Endothelial cell of umbilical vein (primary cell): ENCODE measurements at regions of chr19 and their contacts with region 1.

Region 1: DNA sequence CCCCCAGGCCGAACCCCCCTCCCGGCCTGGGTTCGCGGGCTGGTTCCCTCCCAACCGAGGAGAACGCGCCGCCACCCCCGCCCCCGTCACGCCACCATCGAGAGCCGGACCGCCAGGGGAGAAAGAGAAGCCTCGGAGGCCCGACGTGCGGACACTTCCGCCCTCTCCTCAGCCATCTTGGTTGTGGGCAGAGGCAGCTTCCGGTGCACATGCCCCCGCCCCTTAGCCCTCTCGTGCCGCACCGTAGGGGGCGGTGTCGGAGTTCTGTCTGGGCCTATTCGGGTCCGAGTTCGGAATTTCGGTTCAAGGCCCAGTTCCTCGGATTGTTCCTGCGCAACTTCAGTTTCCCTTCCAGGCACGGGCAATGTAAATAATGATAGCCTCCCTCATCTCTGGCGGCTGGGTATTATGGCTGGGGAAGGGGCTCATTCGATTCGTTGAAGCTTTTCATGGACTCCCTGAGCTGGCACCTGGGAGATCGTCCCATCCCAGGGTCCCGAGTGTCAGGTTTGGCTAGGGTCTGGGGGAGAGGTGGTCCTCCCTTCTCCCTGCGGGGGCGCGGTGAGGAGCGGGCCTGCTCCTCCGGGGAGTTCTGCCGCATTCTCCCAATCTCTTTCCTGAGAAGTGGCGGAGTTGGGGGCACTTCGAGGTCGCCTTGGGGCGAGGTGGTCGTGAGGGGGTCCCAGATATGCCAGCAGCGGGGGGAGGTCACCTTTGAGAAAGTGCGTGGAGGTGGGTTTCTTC is at the starts of genes IER2 and STX10:
- DNase-seq: peak; percentile 96
- H3K4me3 ChIP-seq: peak within 1 kb of the TSS; percentile 50 to 97 (median 69)
- H3K27ac ChIP-seq: peak within 1 kb of the TSS; percentile 90
- H3K4me1 ChIP-seq: peaks cover 12% of the 10 kb centered on the region
- H3K27me3 ChIP-seq: no peaks in the 10 kb centered on the region
- CTCF ChIP-seq: peak in 1 of 2 donors; percentile 55
- POLR2A ChIP-seq: peak; percentile 68
- total RNA-seq, gene IER2: 81.6 and 97.0 TPM in 2 replicates
- total RNA-seq, gene STX10: 63.1 and 67.9 TPM in 2 replicates

Region 2: DNA sequence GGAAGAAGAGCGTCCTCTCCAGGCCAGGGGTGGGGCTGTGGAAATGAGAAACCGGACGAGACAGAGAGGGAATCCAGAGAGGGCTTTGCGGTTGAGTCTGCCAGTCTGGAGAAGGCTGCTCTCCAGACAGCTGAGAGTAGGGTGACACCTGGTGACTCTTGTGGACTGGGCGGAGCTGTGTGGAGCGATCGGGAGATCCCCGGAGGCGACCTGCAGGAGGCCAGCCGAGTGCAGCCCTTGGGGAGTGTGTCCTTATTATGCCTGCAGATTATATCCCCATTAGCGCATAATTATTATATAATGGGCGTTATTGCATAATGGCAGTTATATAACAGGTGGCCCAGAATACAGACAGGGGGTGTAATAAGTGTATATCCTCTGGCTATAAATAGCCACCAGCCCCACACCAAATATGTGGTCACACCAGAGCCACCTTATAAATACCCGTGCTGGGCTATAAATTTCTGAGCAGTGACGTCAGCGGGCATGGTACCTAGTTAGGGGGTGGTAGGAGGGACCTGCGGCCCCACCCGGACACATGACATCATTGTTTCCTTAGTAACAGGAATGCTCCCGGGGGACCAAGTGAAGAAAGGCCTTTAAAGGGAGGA is 113.9 kb before region 1 on chr19:
- CTCF ChIA-PET with region 1: no interaction called
- POLR2A ChIA-PET with region 1: no interaction called
- dilution Hi-C with region 1: no loop called
- intact Hi-C with region 1: no loop called
- DNase-seq: no peak
- H3K4me3 ChIP-seq: no peak overlapping the region
- H3K27ac ChIP-seq: peak overlapping the region; percentile 87
- H3K4me1 ChIP-seq: peaks cover 15% of the 10 kb centered on the region
- H3K27me3 ChIP-seq: no peaks in the 10 kb centered on the region
- CTCF ChIP-seq: no peak
- POLR2A ChIP-seq: no peak

Region 3: DNA sequence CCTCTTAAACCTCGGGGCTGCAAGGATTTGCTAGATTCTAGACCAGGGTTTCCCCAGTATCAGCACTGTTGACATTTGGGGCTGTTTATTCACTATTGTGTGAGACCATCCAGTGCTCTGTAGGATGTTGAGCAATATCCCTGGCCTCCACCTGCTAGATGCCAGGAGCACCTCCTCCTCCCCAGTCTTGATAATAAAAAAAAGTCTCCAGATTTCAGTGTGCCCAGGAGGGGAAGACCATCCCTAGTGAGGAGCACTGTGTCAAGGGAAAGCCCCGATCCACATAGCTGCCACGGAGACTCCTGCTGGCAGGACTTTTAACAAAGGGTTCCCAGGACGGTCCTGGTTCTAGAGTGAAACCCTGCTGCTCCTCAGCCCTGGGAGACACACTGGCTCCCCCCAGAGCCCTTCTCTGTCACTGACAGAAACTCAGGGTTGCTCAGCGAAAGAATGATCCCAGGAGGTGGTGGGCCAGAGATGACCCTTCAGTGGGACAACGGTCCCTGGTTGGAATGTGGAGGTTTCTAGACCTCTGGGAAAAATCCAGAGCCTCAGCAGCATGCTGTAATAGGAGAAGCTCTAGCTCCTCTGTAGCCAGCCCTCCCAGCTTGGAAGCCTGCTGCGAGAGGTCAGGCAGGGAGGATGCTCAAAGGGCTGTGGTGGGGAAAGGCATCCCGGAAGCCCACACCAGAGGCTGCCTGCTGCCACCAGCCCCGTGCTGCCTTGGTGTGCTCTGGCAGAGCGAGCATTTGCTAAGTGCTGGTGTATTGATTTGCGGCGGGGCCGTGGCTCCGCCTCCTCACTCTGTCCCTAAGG is 68.0 kb before region 1 on chr19:
- CTCF ChIA-PET with region 1: no interaction called
- POLR2A ChIA-PET with region 1: no interaction called
- dilution Hi-C with region 1: no loop called
- intact Hi-C with region 1: no loop called
- DNase-seq: peak; percentile 57
- H3K4me3 ChIP-seq: no peak overlapping the region
- H3K27ac ChIP-seq: no peak overlapping the region
- H3K4me1 ChIP-seq: peaks cover 4% of the 10 kb centered on the region
- H3K27me3 ChIP-seq: no peaks in the 10 kb centered on the region
- CTCF ChIP-seq: peak; percentile 39 to 60
- POLR2A ChIP-seq: no peak

Region 4: GRCh38 chr19:13099073-13099999 is 51.0 kb before region 1 on chr19:
- CTCF ChIA-PET with region 1: interaction called, 22 read pairs
- POLR2A ChIA-PET with region 1: interaction called, 8 read pairs
- dilution Hi-C with region 1: no loop called
- intact Hi-C with region 1: loop called (anchors 1 kb)
- DNase-seq: peak; percentile 79
- H3K4me3 ChIP-seq: peak overlapping the region in 2 of 3 experiments; percentile 10 to 17
- H3K27ac ChIP-seq: peak overlapping the region; percentile 89
- H3K4me1 ChIP-seq: peaks cover 54% of the 10 kb centered on the region
- H3K27me3 ChIP-seq: no peaks in the 10 kb centered on the region
- CTCF ChIP-seq: no peak
- POLR2A ChIP-seq: peak; percentile 84

Region 5: GRCh38 chr19:13117772-13118423 is 32.5 kb before region 1 on chr19 and contains the start of gene NACC1:
- CTCF ChIA-PET with region 1: interaction called, 14 read pairs
- POLR2A ChIA-PET with region 1: interaction called, 7 read pairs
- dilution Hi-C with region 1: no loop called
- intact Hi-C with region 1: loop called (anchors 1 kb)
- DNase-seq: peak; percentile 87
- H3K4me3 ChIP-seq: peak within 1 kb of the TSS; percentile 64 to 99 (median 81)
- H3K27ac ChIP-seq: peak within 1 kb of the TSS; percentile 57
- H3K4me1 ChIP-seq: peaks cover 13% of the 10 kb centered on the region
- H3K27me3 ChIP-seq: no peaks in the 10 kb centered on the region
- CTCF ChIP-seq: no peak
- POLR2A ChIP-seq: no peak
- total RNA-seq, gene NACC1: 95.4 and 97.6 TPM in 2 replicates

Region 6: DNA sequence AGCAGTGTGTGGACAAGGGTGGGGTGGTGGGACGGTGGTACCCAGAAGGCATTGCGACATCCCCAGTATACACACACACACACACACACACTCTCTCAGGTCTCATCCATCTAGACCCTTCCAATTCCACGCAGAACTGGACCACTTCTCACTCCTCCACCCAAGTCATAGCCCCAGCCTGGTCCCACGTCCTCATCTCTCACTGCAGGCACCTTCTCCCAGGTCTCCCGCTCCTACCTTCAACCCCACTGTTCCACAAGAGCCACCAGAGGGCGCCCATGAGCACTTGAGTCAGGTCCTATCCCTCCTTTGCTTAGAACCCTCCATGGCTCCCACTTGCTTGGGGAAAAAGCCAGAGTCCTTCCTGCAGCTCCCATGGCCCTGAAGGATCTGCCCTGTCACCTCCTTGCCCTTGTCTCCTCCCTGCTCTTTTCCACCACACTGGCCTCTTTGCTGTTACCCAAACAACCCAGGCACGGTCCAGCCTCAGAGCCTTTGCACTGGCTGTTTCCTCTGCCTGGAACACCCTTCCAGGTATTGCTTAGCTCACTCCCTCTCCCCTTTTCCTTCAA is 62.5 kb after region 1 on chr19:
- CTCF ChIA-PET with region 1: interaction called, 3 read pairs
- POLR2A ChIA-PET with region 1: no interaction called
- dilution Hi-C with region 1: no loop called
- intact Hi-C with region 1: loop called (anchors 2 kb)
- DNase-seq: peak; percentile 39
- H3K4me3 ChIP-seq: no peak overlapping the region
- H3K27ac ChIP-seq: no peak overlapping the region
- H3K4me1 ChIP-seq: no peaks in the 10 kb centered on the region
- H3K27me3 ChIP-seq: no peaks in the 10 kb centered on the region
- CTCF ChIP-seq: peak; percentile 65 to 74
- POLR2A ChIP-seq: no peak

Region 7: DNA sequence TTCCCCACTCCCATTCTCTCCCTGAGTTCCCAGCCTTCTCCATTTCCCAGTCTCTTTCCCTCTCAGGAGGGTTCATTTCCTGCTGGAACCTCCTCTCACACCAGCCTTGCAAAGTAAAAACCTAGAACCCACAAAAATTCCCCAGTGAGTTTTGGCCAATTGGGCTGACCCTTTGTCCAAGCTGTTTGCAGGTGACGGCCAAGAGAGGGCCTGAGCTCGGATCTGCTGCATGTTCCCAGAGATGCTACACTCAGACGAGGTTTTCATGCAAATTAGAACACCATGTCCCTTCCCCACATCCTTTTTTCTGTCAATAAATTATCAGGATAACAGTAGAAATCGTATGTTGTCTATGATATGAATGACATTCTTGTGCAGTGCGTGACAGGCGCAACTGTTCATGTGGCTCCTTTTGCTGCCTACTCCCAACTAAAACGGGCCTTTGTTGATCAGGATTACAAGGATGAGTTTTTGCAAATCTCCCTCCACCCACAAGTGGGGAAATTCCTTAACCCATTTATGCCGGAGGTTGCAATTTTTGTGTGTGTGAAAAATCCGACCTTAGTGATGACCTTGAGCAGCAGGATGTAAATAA is 206.4 kb after region 1 on chr19:
- CTCF ChIA-PET with region 1: no interaction called
- POLR2A ChIA-PET with region 1: no interaction called
- dilution Hi-C with region 1: no loop called
- intact Hi-C with region 1: no loop called
- DNase-seq: no peak
- H3K4me3 ChIP-seq: no peak overlapping the region
- H3K27ac ChIP-seq: no peak overlapping the region
- H3K4me1 ChIP-seq: no peaks in the 10 kb centered on the region
- H3K27me3 ChIP-seq: no peaks in the 10 kb centered on the region
- CTCF ChIP-seq: no peak
- POLR2A ChIP-seq: no peak

Region 8: DNA sequence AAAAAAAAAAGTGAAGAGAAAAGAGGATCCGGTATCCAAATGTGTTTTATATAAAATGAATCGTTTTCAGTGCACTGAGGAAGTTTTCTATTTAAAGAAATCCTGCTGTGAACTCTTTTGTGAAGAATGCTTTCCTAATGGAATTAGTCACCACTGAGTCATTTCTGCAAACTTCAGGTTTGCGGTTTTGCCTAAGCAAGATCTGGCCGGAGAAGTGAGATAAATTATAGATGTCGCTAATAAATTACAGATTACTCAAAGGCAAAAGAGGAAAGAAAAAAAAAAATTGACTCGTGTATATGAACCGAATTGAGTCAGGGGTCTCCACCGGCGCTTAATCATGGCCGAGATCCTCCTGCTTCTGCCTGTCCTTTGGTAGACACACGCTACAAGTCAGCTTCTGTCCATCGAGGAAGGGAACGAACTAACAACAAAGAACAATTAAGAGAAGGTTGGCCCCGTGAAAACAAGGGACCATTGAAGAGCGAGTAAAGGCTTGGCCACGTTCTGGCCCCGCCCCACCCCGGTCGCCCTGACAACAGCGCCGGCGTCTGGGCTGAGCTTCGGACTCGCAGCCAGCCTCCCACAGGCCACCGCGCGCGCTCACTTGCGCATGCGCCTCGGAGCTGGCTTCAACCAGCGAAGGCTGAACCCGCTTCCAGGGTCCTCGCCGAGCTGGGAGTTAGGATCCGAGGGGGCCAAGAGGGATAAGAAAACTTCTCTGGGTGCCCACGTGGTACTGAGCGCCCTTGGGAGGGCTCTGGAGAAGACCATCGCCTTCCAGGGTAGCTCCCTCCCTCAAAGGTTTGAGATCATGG is 581.0 kb after region 1 on chr19:
- CTCF ChIA-PET with region 1: no interaction called
- POLR2A ChIA-PET with region 1: no interaction called
- dilution Hi-C with region 1: no loop called
- intact Hi-C with region 1: loop called (anchors 5 kb)
- DNase-seq: peak; percentile 97
- H3K4me3 ChIP-seq: peak overlapping the region; percentile 19 to 75 (median 39)
- H3K27ac ChIP-seq: peak overlapping the region; percentile 98
- H3K4me1 ChIP-seq: peaks cover 23% of the 10 kb centered on the region
- H3K27me3 ChIP-seq: no peaks in the 10 kb centered on the region
- CTCF ChIP-seq: no peak
- POLR2A ChIP-seq: peak; percentile 89